PC-9 (cell line): ENCODE measurements at regions of chr7 and their contacts with region 1.

Region 1: DNA sequence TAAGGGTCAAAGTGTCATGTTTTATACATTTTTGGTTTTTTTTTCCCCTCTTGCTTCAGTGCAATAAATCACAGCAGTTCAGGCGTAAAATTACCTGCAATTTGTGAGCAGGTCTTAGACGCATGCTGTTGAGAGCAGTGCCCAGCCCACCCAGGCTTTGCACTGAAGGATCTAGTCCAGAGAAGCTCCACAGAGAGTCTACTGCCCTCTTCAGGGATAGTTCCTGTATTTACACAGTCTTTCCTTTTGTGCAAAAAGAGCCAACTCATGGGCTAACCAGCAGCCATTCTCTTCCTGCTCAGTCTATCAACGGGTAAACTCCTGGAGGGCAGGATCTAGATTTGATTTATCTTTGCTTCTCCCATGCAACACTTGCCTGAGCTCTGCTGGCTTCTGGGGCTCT is 82.2 kb upstream of the NAMPT start:
- DNase-seq: no peak
- H3K4me3 ChIP-seq: no peak overlapping the region
- H3K27ac ChIP-seq: peak overlapping the region; percentile 99
- H3K4me1 ChIP-seq: peaks cover 54% of the 10 kb centered on the region
- H3K27me3 ChIP-seq: no peaks in the 10 kb centered on the region
- CTCF ChIP-seq: 0 out of 2 replicates have a peak, but pooled peaks have one; percentile 21

Region 2: GRCh38 chr7:106346678-106347217 is 20.3 kb before region 1 on chr7:
- CTCF ChIA-PET with region 1: no interaction called
- POLR2A ChIA-PET with region 1: no interaction called
- intact Hi-C with region 1: loop called (anchors 1 kb)
- DNase-seq: peak; percentile 24 to 96
- H3K4me3 ChIP-seq: peak overlapping the region; percentile 41; the same call in 1 of the 2 replicates
- H3K27ac ChIP-seq: peak overlapping the region; percentile 98
- H3K4me1 ChIP-seq: peaks cover 38% of the 10 kb centered on the region
- H3K27me3 ChIP-seq: no peaks in the 10 kb centered on the region
- CTCF ChIP-seq: no peak

Region 3: GRCh38 chr7:106377847-106378361 is 10.9 kb after region 1 on chr7:
- CTCF ChIA-PET with region 1: no interaction called
- POLR2A ChIA-PET with region 1: no interaction called
- intact Hi-C with region 1: loop called (anchors 1 kb)
- DNase-seq: peak; percentile 69 to 70
- H3K4me3 ChIP-seq: no peak overlapping the region
- H3K27ac ChIP-seq: peak overlapping the region; percentile 88
- H3K4me1 ChIP-seq: peaks cover 26% of the 10 kb centered on the region
- H3K27me3 ChIP-seq: no peaks in the 10 kb centered on the region
- CTCF ChIP-seq: no peak

Region 4: GRCh38 chr7:106418094-106418493 is 51.1 kb after region 1 on chr7:
- CTCF ChIA-PET with region 1: no interaction called
- POLR2A ChIA-PET with region 1: no interaction called
- intact Hi-C with region 1: loop called (anchors 1 kb)
- DNase-seq: peak; percentile 17 to 92
- H3K4me3 ChIP-seq: peak overlapping the region; percentile 24; the same call in 1 of the 2 replicates
- H3K27ac ChIP-seq: peak overlapping the region; percentile 98
- H3K4me1 ChIP-seq: peaks cover 48% of the 10 kb centered on the region
- H3K27me3 ChIP-seq: no peaks in the 10 kb centered on the region
- CTCF ChIP-seq: no peak